Right cardiac atrium (tissue), 5 donors: ENCODE measurements at regions of chr1 and their contacts with region 1.

Region 1: GRCh38 chr1:25487628-25488027 is 55.8 kb upstream of the LDLRAP1 start:
- DNase-seq: no peak
- ATAC-seq: no peak
- H3K4me3 ChIP-seq: no peak overlapping the region
- H3K27ac ChIP-seq: no peak overlapping the region
- H3K4me1 ChIP-seq: no peaks in the 10 kb centered on the region
- H3K27me3 ChIP-seq: no peaks in the 10 kb centered on the region

Region 2: GRCh38 chr1:25430666-25431505 is 56.7 kb before region 1 on chr1 and contains the start of gene MACO1:
- intact Hi-C with region 1: loop called in 1 of 4 experiments (anchors 10 kb)
- DNase-seq: peak; percentile 95 to 98 (median 98)
- ATAC-seq: peak; percentile 97 to 98
- H3K4me3 ChIP-seq: peak within 1 kb of the TSS; percentile 99
- H3K27ac ChIP-seq: peak within 1 kb of the TSS; percentile 99
- H3K4me1 ChIP-seq: peaks cover 3% of the 10 kb centered on the region
- H3K27me3 ChIP-seq: no peaks in the 10 kb centered on the region
- total RNA-seq, gene MACO1: 16.1 to 20.2 (median 17.4) TPM